PC-9 (cell line): ENCODE measurements at regions of chr5 and their contacts with region 1.

Region 1: GRCh38 chr5:143002459-143003328 is 232.5 kb downstream of the ARHGAP26 start:
- DNase-seq: no peak
- H3K4me3 ChIP-seq: no peak overlapping the region
- H3K27ac ChIP-seq: no peak overlapping the region
- H3K4me1 ChIP-seq: no peaks in the 10 kb centered on the region
- H3K27me3 ChIP-seq: no peaks in the 10 kb centered on the region
- CTCF ChIP-seq: peak; percentile 65

Region 2: DNA sequence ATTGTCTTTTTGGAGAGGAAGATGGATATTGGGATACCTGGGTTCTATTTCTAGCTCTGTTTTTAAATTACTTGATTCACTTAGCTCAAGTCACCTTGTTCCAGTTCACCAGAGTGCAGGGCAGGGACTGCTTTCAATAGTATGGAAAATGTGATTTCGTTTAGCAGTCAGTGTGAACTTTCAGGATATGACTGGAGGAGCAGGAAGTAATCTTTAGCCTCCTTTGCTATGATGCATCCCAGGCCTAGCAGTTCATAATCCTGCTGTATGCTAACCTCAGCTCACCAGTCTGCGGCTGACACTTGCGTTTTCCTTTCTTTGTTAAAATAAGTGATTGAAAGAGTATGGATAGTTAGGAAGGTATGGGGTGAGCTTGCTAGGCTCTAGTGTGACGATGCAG is 62.8 kb before region 1 on chr5:
- CTCF ChIA-PET with region 1: interaction called, 10 read pairs
- POLR2A ChIA-PET with region 1: no interaction called
- intact Hi-C with region 1: no loop called
- DNase-seq: no peak
- H3K4me3 ChIP-seq: no peak overlapping the region
- H3K27ac ChIP-seq: no peak overlapping the region
- H3K4me1 ChIP-seq: no peaks in the 10 kb centered on the region
- H3K27me3 ChIP-seq: no peaks in the 10 kb centered on the region
- CTCF ChIP-seq: no peak